ENCODE measurements at regions of chr7 and their contacts with region 1.

Region 1: DNA sequence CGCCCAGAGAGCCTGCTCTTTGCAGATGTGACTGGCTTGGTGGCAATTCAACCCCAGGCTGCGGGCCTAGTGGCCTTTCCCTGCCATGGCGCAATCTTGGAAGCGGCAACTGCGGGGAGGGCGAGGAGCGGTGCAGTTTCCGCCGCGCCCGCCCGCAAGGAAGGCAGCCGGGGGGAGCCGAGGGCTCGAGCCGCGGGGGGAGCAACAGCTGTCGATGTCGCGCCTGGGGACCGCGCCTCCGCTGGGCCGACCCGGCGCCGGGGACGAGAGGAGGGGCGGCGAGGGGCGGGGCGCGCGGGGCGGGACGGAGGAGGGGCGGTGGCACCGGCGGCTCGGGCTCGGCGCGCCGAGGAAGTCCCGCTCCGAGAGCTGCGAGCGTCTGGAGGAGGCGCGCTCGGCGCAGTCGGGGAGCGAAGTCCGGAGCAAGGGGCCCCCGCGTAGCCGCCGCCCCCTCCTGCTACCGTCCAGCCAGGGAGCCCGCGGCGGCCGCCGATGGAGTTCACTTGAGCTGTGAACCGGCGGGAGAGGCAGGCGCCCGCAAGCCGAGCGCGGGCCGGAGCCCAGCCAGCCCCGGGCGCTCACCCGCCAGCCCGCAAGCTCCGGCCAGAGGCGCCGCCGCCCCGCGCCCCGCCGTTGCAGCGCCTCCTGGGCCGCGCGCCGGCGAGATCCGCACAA is 438.1 kb upstream of the GALNT17 start:
- DNase-seq: no peak
- H3K4me3 ChIP-seq: peak overlapping the region; percentile 72 to 87 (median 82)
- H3K27ac ChIP-seq: peak overlapping the region; percentile 89 to 94 (median 91)
- H3K4me1 ChIP-seq: peaks cover 7 to 42% (median 16%) of the 10 kb centered on the region in 3 donors
- H3K27me3 ChIP-seq: peaks cover 0 to 18% (median 2%) of the 10 kb centered on the region in 4 donors
- CTCF ChIP-seq: peak in 4 of 6 experiments; percentile 21 to 51 (median 42)
- POLR2A ChIP-seq: peak in 3 of 4 donors; percentile 54 to 74 (median 64)

Region 2: DNA sequence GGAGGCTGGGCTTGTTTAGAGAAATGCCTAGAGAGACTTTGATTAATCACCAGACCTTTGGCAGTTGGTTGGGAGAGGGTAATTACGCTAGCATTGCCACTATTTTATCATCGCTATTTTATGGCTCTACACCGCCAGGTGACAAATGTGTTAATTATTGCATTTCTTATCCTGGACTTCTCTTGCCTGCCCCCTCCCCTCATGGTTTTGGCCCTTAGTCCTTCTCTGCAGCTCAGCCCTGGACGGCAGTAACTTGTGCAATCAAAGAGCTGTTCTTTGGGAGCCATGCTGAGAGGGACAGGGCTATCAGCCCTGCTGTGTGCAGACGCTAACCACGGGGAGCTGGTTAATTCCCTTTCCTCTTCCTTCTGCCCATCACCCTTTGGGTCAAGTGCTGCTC is 510.5 kb before region 1 on chr7:
- intact Hi-C with region 1: loop called (anchors 10 kb)
- DNase-seq: no peak
- H3K4me3 ChIP-seq: no peak overlapping the region
- H3K27ac ChIP-seq: no peak overlapping the region
- H3K4me1 ChIP-seq: peaks cover 0 to 12% (median 3%) of the 10 kb centered on the region in 3 donors
- H3K27me3 ChIP-seq: no peaks in the 10 kb centered on the region
- CTCF ChIP-seq: no peak
- POLR2A ChIP-seq: no peak

Region 3: DNA sequence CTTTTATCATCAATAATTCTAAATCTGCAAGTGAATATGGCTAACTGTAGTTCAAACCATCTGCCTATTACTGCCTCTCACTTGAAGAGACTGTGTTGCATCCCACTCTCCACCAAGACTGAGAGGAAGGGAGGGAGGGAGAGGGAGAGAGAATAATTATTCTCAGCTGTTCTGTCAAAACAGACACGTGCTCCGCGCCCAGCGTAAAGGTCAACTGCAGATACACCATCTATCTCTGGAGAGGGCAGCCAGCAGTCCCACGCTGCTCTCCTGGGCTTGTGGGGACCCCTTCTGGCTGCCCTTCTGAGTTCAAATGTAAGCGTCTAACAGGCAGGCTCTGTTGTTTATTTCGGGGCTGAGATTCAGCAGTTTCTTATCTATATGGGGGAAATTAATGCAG is 187.4 kb before region 1 on chr7:
- intact Hi-C with region 1: no loop called
- DNase-seq: no peak
- H3K4me3 ChIP-seq: no peak overlapping the region
- H3K27ac ChIP-seq: no peak overlapping the region
- H3K4me1 ChIP-seq: no peaks in the 10 kb centered on the region
- H3K27me3 ChIP-seq: no peaks in the 10 kb centered on the region
- CTCF ChIP-seq: no peak
- POLR2A ChIP-seq: no peak

Region 4: GRCh38 chr7:70569335-70569819 is 124.4 kb before region 1 on chr7:
- intact Hi-C with region 1: no loop called
- DNase-seq: no peak
- H3K4me3 ChIP-seq: no peak overlapping the region
- H3K27ac ChIP-seq: no peak overlapping the region
- H3K4me1 ChIP-seq: peaks cover 7 to 37% (median 8%) of the 10 kb centered on the region in 3 donors
- H3K27me3 ChIP-seq: peaks cover 0 to 22% (median 0%) of the 10 kb centered on the region in 4 donors
- CTCF ChIP-seq: no peak
- POLR2A ChIP-seq: no peak

Region 5: GRCh38 chr7:70614237-70615045 is 79.4 kb before region 1 on chr7:
- intact Hi-C with region 1: loop called (anchors 10 kb)
- DNase-seq: no peak
- H3K4me3 ChIP-seq: peak overlapping the region in 2 of 4 donors; percentile 7 to 34
- H3K27ac ChIP-seq: peak overlapping the region; percentile 9 to 79 (median 67)
- H3K4me1 ChIP-seq: peaks cover 11 to 29% (median 12%) of the 10 kb centered on the region in 3 donors
- H3K27me3 ChIP-seq: no peaks in the 10 kb centered on the region
- CTCF ChIP-seq: peak in 1 of 6 experiments; percentile 6
- POLR2A ChIP-seq: no peak